A549 (cell line): ENCODE measurements at regions of chr5 and their contacts with region 1.

Region 1: DNA sequence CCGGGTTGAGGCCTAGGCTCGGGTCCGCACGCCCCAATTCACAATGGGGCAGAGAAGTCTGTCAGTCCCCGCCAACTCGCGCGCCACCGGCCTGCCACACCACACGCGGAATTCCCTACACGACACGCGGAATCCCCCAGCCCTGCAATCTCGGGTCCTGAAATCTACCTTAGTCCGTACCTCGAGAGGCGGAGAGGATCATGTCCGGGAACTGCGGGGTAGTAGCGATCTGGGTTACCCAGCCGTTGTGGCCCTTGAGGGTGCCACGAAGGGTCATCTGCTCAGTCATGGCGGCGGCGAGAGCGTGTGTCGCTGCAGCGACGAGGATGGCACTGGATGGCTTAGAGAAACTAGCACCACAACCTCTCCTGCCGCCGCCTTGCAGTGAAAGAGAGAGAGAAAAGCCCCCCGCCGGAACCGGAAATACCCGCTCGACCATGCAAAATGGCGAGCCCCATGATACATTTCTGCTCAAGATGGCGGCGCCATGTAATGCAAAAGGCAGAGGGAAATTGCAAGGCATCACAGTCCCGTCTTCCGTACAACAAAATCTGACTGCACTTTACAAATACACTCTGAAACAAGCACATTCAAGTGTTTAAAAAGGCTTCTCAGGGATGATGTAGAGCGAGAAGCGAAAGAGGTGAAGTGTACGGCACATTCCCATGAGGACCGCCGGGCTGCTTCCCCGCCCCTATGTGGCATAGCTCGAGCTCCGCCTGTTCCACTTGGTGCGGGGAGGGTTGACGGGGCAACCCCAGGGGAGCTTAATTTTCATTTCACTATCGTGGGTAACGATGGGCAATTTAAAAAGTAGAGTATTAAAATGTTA is at the start of gene RACK1:
- DNase-seq: peak; percentile 83 to 92
- ATAC-seq: peak; percentile 66 to 72
- H3K4me3 ChIP-seq: peak within 1 kb of the TSS; percentile 82
- H3K27ac ChIP-seq: peak within 1 kb of the TSS; percentile 91 to 97
- H3K4me1 ChIP-seq: peaks cover 55% of the 10 kb centered on the region
- CTCF ChIP-seq: no peak
- EP300 ChIP-seq: no peak
- POLR2A ChIP-seq: peak; percentile 93
- RAD21 ChIP-seq: no peak
- polyA plus RNA-seq, gene RACK1: 3,139 and 4,035 TPM in 2 replicates

Region 2: DNA sequence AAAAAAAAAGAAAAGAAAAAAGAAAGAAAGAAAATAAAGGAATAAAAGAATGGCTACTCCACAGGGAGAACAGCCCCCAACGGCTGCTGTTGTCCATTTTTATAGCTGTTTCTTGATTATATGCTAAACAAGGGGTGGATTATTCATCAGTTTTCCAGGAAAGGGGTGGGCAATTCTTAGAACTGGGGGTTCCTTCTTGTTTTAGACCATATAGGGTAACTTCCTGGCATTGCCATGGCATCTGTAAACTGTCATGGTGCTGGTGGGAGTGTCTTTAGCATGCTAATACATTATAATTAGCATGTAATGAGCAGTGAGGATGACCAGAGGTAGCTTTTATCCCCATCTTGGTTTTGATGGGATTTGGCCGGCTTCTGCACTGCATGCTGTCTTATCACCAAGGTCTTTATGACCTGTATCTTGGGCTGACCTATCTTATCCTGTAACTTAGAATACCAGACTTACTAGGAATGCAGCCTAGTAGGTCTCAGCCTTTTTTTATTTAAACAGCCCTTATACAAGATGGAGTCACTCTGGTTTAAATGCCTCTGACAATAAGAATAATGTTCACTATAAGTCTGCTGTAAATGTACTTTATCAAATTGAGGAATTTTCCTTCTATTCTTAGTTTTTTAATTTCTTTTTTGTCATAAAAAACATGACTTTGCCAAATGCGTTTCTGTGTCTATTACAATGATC is 67.3 kb before region 1 on chr5:
- CTCF ChIA-PET with region 1: no interaction called
- POLR2A ChIA-PET with region 1: no interaction called
- DNase-seq: no peak
- ATAC-seq: no peak
- H3K4me3 ChIP-seq: no peak overlapping the region
- H3K27ac ChIP-seq: no peak overlapping the region
- H3K4me1 ChIP-seq: peaks cover 8% of the 10 kb centered on the region; the same call in 2 of the 3 replicates
- CTCF ChIP-seq: no peak
- EP300 ChIP-seq: no peak
- POLR2A ChIP-seq: no peak
- RAD21 ChIP-seq: no peak

Region 3: GRCh38 chr5:181260387-181261319 is 16.9 kb after region 1 on chr5 and contains the start of gene TRIM52:
- CTCF ChIA-PET with region 1: interaction called, 3 read pairs
- POLR2A ChIA-PET with region 1: interaction called, 21 read pairs
- DNase-seq: peak; percentile 68 to 93
- ATAC-seq: peak; percentile 85 to 92
- H3K4me3 ChIP-seq: peak within 1 kb of the TSS; percentile 94
- H3K27ac ChIP-seq: peak within 1 kb of the TSS; percentile 98 to 99
- H3K4me1 ChIP-seq: peaks cover 18% of the 10 kb centered on the region
- CTCF ChIP-seq: no peak
- EP300 ChIP-seq: no peak
- POLR2A ChIP-seq: peak; percentile 96
- RAD21 ChIP-seq: no peak
- polyA plus RNA-seq, gene TRIM52: 10.9 and 11.1 TPM in 2 replicates

Region 4: GRCh38 chr5:181271081-181271480 is 27.4 kb after region 1 on chr5:
- CTCF ChIA-PET with region 1: no interaction called
- POLR2A ChIA-PET with region 1: no interaction called
- DNase-seq: no peak
- ATAC-seq: no peak
- H3K4me3 ChIP-seq: no peak overlapping the region
- H3K27ac ChIP-seq: no peak overlapping the region
- H3K4me1 ChIP-seq: no peaks in the 10 kb centered on the region
- CTCF ChIP-seq: no peak
- EP300 ChIP-seq: no peak
- POLR2A ChIP-seq: no peak
- RAD21 ChIP-seq: no peak